ENCODE measurements at regions of chr3 and their contacts with region 1.

Region 1: DNA sequence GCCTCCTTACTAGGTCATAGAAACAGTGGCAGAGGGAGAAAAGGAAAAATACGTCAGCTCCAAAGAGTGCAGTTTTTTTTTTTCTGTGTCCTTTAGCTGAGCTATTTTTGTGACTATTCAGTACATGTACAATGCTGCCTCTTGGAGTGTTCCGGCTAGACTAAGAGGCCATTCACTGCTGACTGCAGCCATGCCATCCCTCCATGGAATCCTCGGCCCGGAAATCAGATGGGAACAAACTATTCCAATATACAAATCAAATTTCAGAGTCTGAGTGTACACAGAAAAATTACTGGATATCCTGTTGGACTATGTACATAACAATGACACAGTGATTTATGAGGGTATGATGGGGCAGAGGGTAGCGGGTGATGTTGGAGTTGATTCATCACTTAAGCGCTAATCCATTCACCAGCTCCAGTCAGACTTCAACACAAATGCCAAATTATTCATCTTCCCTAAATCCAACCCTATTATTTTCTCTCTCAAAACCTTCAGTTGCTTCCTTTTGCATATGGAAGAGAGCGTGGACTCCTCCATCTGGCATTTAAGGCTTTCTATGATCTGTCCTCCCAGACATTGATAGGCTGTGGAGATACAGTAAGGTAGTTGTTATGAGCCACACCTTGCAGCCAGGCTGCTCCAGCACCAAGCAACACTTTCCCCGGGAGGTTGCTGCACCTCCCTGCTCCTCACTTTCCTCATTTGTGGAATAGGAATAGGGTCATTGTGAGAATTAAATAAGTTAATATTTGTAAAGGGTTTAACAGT is 109.1 kb downstream of the LPP start:
- DNase-seq: peak; percentile 96
- ATAC-seq: peak; percentile 71
- H3K4me3 ChIP-seq: peak overlapping the region; percentile 46
- H3K27ac ChIP-seq: peak overlapping the region; percentile 96
- H3K4me1 ChIP-seq: peaks cover 75% of the 10 kb centered on the region
- H3K27me3 ChIP-seq: no peaks in the 10 kb centered on the region
- CTCF ChIP-seq: no peak

Region 2: GRCh38 chr3:187919048-187919447 is 344.1 kb before region 1 on chr3:
- CTCF ChIA-PET with region 1: no interaction called
- POLR2A ChIA-PET with region 1: no interaction called
- intact Hi-C with region 1: loop called (anchors 10 kb)
- DNase-seq: no peak
- ATAC-seq: no peak
- H3K4me3 ChIP-seq: no peak overlapping the region
- H3K27ac ChIP-seq: no peak overlapping the region
- H3K4me1 ChIP-seq: peaks cover 50% of the 10 kb centered on the region
- H3K27me3 ChIP-seq: no peaks in the 10 kb centered on the region
- CTCF ChIP-seq: no peak

Region 3: DNA sequence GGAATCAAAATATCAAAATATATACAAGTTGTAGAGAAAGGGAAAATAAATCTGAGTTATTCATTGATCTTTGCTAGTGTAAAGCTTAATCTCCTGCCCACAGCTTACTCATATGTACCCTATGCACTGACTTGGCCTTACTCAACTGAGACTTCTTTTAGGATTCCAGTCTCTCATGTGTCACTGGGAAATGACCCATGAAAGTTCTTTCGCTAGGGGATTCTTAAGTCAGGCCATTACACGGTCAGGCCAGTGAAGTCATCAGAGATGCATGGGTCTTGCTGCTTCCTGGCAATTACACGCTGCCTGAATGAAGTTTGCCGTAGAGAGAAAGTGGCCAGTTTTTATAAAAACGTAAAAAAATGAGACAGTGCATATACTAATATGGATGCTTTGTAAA is 129.9 kb before region 1 on chr3:
- CTCF ChIA-PET with region 1: no interaction called
- POLR2A ChIA-PET with region 1: no interaction called
- intact Hi-C with region 1: loop called (anchors 2 kb)
- DNase-seq: peak; percentile 53
- ATAC-seq: 0 out of 2 replicates have a peak, but pooled peaks have one; percentile 19
- H3K4me3 ChIP-seq: no peak overlapping the region
- H3K27ac ChIP-seq: peak overlapping the region; percentile 17; the same call in 1 of the 2 replicates
- H3K4me1 ChIP-seq: 0 out of 2 replicates have a peak, but pooled peaks cover 6% of the 10 kb centered on the region
- H3K27me3 ChIP-seq: no peaks in the 10 kb centered on the region
- CTCF ChIP-seq: no peak

Region 4: GRCh38 chr3:188230962-188231361 is 32.1 kb before region 1 on chr3:
- CTCF ChIA-PET with region 1: no interaction called
- POLR2A ChIA-PET with region 1: no interaction called
- intact Hi-C with region 1: loop called (anchors 1 kb)
- DNase-seq: peak; percentile 85
- ATAC-seq: peak; percentile 65
- H3K4me3 ChIP-seq: no peak overlapping the region
- H3K27ac ChIP-seq: peak overlapping the region; percentile 78
- H3K4me1 ChIP-seq: peaks cover 51% of the 10 kb centered on the region
- H3K27me3 ChIP-seq: no peaks in the 10 kb centered on the region
- CTCF ChIP-seq: no peak

Region 5: DNA sequence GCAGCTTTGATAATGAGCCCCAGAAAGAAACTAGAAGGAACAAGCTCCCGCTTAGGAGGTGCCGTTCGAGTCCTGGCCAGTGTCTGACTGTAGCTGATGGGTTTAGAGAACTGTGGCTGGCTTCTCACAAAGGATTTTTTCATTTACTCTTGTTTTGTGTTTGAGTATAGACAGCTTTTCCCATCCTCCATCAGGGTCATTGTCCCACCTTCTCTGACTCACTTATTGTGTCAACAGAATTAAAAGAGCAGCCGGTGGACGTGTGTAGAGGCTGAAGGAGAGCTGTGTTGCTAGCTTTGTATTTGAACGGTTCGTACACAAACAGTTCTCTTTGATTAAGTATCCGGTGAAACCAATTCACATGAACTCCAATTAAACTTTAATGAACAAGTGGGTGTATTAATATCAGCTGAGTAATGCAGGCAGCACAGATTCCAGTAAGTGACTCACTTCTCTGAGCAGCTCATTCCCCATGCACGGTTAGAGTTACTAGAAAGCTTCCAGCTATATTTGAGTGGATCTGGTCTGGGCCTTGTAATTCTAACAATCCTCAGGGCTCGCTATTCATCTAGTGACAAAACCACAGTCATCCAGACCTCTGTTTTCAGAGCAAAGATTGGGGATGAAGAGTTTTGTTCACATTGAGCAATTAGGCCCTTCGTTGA is 31.9 kb after region 1 on chr3:
- CTCF ChIA-PET with region 1: interaction called, 3 read pairs
- POLR2A ChIA-PET with region 1: interaction called, 5 read pairs
- intact Hi-C with region 1: loop called (anchors 1 kb)
- DNase-seq: peak; percentile 94
- ATAC-seq: peak; percentile 89
- H3K4me3 ChIP-seq: peak overlapping the region; percentile 22; the same call in 1 of the 2 replicates
- H3K27ac ChIP-seq: peak overlapping the region; percentile 85
- H3K4me1 ChIP-seq: peaks cover 62% of the 10 kb centered on the region
- H3K27me3 ChIP-seq: no peaks in the 10 kb centered on the region
- CTCF ChIP-seq: no peak

Measured in PC-3 (cell line).